Naive thymus-derived CD4-positive, alpha-beta T cell (primary cell): ENCODE measurements at regions of chr3 and their contacts with region 1.

Region 1: GRCh38 chr3:23430781-23431398 is 227.8 kb downstream of the UBE2E2 start:
- DNase-seq: no peak
- ATAC-seq: no peak
- H3K4me3 ChIP-seq: no peak overlapping the region
- H3K4me3 Mint-ChIP-seq: no peak overlapping the region
- H3K27ac ChIP-seq: no peak overlapping the region
- H3K27ac Mint-ChIP-seq: peak overlapping the region in 2 of 9 donors; percentile 3 to 58
- H3K4me1 ChIP-seq: no peaks in the 10 kb centered on the region
- H3K4me1 Mint-ChIP-seq: peaks cover 7 to 14% (median 9%) of the 10 kb centered on the region in 7 donors
- H3K27me3 ChIP-seq: no peaks in the 10 kb centered on the region
- H3K27me3 Mint-ChIP-seq: no peaks in the 10 kb centered on the region

Region 2: GRCh38 chr3:23442598-23443383 is 11.9 kb after region 1 on chr3:
- CTCF ChIA-PET with region 1: interaction called, 3 read pairs
- POLR2A ChIA-PET with region 1: no interaction called
- intact Hi-C with region 1: loop called in 1 of 2 experiments (anchors 1 kb)
- DNase-seq: peak in 7 of 9 donors; percentile 11 to 48 (median 40)
- ATAC-seq: peak; percentile 90
- H3K4me3 ChIP-seq: no peak overlapping the region
- H3K4me3 Mint-ChIP-seq: peak overlapping the region in 9 of 10 donors; percentile 5 to 65 (median 32)
- H3K27ac ChIP-seq: no peak overlapping the region
- H3K27ac Mint-ChIP-seq: peak overlapping the region in 2 of 9 donors; percentile 5 to 78
- H3K4me1 ChIP-seq: peaks cover 0 to 26% of the 10 kb centered on the region in 2 donors
- H3K4me1 Mint-ChIP-seq: peaks cover 20 to 60% (median 49%) of the 10 kb centered on the region in 7 donors
- H3K27me3 ChIP-seq: no peaks in the 10 kb centered on the region
- H3K27me3 Mint-ChIP-seq: peaks cover 0 to 9% (median 0%) of the 10 kb centered on the region in 5 donors